SK-N-SH (cell line): ENCODE measurements at regions of chr1 and their contacts with region 1.

Region 1: GRCh38 chr1:50271968-50272578 is 151.2 kb downstream of the DMRTA2 start:
- DNase-seq: peak; percentile 65
- H3K4me3 ChIP-seq: no peak overlapping the region; a peak in 1 of 4 replicates
- H3K27ac ChIP-seq: peak overlapping the region in 1 of 2 experiments; percentile 100; a peak in 3 of 4 replicates
- H3K4me1 ChIP-seq: peaks cover 0 to 64% of the 10 kb centered on the region in 2 experiments; a peak in 2 of 4 replicates
- H3K27me3 ChIP-seq: no peaks in the 10 kb centered on the region
- CTCF ChIP-seq: peak; percentile 73
- EP300 ChIP-seq: no peak
- RAD21 ChIP-seq: peak; percentile 82

Region 2: GRCh38 chr1:50080909-50081586 is 191.0 kb before region 1 on chr1:
- CTCF ChIA-PET with region 1: interaction called, 11 read pairs
- POLR2A ChIA-PET with region 1: no interaction called
- DNase-seq: peak; percentile 27
- H3K4me3 ChIP-seq: no peak overlapping the region; a peak in 1 of 4 replicates
- H3K27ac ChIP-seq: no peak overlapping the region; a peak in 1 of 4 replicates
- H3K4me1 ChIP-seq: no peaks in the 10 kb centered on the region; a peak in 1 of 4 replicates
- H3K27me3 ChIP-seq: no peaks in the 10 kb centered on the region
- CTCF ChIP-seq: peak; percentile 50
- EP300 ChIP-seq: no peak
- RAD21 ChIP-seq: peak; percentile 58

Region 3: DNA sequence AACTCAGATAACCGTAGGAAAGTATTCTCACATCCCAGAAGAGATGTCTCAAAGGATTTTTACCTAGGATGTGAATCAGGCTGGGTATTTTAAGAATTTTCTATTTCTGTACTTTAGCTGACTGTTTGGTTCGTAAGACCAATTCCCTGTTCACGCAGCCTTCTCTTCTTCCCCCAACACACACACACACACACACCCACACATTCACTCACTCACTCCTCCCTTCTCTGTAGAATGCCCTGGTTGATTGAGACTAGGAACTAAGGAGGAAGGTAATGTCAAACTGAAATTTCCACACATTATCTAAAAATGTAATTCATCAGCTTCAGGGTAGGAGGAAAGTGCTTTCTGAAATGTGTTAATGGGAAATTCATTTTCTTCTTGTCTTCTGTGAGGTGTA is 119.8 kb before region 1 on chr1:
- CTCF ChIA-PET with region 1: interaction called, 10 read pairs
- POLR2A ChIA-PET with region 1: no interaction called
- DNase-seq: no peak
- H3K4me3 ChIP-seq: no peak overlapping the region
- H3K27ac ChIP-seq: no peak overlapping the region; a peak in 2 of 4 replicates
- H3K4me1 ChIP-seq: peaks cover 0 to 15% of the 10 kb centered on the region in 2 experiments; a peak in 2 of 4 replicates
- H3K27me3 ChIP-seq: no peaks in the 10 kb centered on the region
- CTCF ChIP-seq: no peak
- EP300 ChIP-seq: no peak
- RAD21 ChIP-seq: no peak

Region 4: GRCh38 chr1:50300297-50300696 is 28.2 kb after region 1 on chr1:
- CTCF ChIA-PET with region 1: interaction called, 22 read pairs
- POLR2A ChIA-PET with region 1: interaction called, 10 read pairs
- DNase-seq: peak; percentile 42
- H3K4me3 ChIP-seq: no peak overlapping the region
- H3K27ac ChIP-seq: peak overlapping the region in 1 of 2 experiments; percentile 89; a peak in 2 of 4 replicates
- H3K4me1 ChIP-seq: peaks cover 0 to 34% of the 10 kb centered on the region in 2 experiments; a peak in 2 of 4 replicates
- H3K27me3 ChIP-seq: no peaks in the 10 kb centered on the region
- CTCF ChIP-seq: no peak
- EP300 ChIP-seq: peak in 1 of 2 experiments; percentile 77; a peak in 2 of 4 replicates
- RAD21 ChIP-seq: no peak

Region 5: DNA sequence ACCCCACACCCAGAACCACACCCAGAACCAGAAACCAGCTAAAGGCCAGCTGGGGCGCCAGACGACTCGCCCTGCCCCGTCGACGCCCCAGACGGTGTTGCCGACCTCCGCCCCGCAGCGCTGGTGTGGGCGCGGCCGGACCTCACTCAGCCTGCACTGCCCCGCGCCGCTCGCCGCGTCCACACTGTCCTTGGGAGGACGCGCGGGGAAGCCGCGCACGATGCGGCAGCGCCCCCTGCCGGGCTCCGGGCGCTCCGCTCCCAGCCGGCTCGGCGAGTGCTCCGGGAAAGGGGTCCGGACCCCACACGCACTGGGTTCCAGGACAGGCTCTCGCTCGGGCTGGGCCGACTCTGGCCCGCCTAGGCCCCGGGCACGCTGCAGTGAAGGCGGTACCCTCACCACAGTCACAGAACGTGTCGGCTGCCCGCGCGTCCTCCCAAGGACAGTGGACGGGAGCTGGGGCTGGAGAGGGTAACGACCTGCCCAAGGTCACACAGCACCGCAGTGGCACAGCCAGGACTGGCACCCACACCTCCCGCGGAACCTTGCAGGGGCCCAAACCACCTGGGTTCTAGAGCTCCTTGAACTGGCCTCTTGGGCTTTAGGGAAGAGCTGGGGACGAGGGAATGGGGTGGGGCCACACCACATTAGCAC is 61.0 kb after region 1 on chr1:
- CTCF ChIA-PET with region 1: interaction called, 100 read pairs
- POLR2A ChIA-PET with region 1: interaction called, 10 read pairs
- DNase-seq: peak; percentile 90
- H3K4me3 ChIP-seq: peak overlapping the region; percentile 23 to 25; a peak in 2 of 4 replicates
- H3K27ac ChIP-seq: peak overlapping the region in 1 of 2 experiments; percentile 78; a peak in 2 of 4 replicates
- H3K4me1 ChIP-seq: peaks cover 0 to 57% of the 10 kb centered on the region in 2 experiments; a peak in 2 of 4 replicates
- H3K27me3 ChIP-seq: no peaks in the 10 kb centered on the region
- CTCF ChIP-seq: peak; percentile 69
- EP300 ChIP-seq: no peak; a peak in 1 of 4 replicates
- RAD21 ChIP-seq: peak; percentile 92